Endothelial cell of umbilical vein (primary cell): ENCODE measurements at regions of chr13 and their contacts with region 1.

Region 1: GRCh38 chr13:40682449-40683240 is 16.2 kb upstream of the FOXO1 start:
- DNase-seq: peak; percentile 63
- H3K4me3 ChIP-seq: no peak overlapping the region
- H3K27ac ChIP-seq: peak overlapping the region; percentile 73
- H3K4me1 ChIP-seq: peaks cover 22% of the 10 kb centered on the region
- H3K27me3 ChIP-seq: no peaks in the 10 kb centered on the region
- CTCF ChIP-seq: peak; percentile 11 to 21
- POLR2A ChIP-seq: no peak

Region 2: DNA sequence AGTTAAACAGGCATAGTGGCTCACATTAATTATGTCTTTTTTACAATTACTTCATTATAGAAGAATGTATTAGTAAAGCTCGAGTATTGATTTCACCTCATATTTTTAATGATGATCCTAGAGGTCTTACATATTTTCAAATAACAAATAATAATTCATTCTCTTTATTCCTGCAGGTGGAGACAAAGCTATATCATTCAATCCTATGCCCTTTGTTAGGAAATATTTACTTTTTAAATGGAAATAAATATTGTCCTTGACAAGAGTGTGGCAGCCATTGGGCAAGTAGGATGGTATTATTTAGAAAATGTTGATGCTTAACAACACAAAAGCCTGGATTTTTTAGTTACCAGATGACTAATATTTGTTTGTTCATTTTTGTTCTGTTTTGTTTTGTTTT is 899.6 kb before region 1 on chr13:
- CTCF ChIA-PET with region 1: interaction called, 47 read pairs
- POLR2A ChIA-PET with region 1: no interaction called
- dilution Hi-C with region 1: no loop called
- intact Hi-C with region 1: loop called (anchors 2 kb)
- DNase-seq: peak; percentile 80
- H3K4me3 ChIP-seq: no peak overlapping the region
- H3K27ac ChIP-seq: no peak overlapping the region
- H3K4me1 ChIP-seq: peaks cover 62% of the 10 kb centered on the region
- H3K27me3 ChIP-seq: no peaks in the 10 kb centered on the region
- CTCF ChIP-seq: no peak
- POLR2A ChIP-seq: no peak

Region 3: DNA sequence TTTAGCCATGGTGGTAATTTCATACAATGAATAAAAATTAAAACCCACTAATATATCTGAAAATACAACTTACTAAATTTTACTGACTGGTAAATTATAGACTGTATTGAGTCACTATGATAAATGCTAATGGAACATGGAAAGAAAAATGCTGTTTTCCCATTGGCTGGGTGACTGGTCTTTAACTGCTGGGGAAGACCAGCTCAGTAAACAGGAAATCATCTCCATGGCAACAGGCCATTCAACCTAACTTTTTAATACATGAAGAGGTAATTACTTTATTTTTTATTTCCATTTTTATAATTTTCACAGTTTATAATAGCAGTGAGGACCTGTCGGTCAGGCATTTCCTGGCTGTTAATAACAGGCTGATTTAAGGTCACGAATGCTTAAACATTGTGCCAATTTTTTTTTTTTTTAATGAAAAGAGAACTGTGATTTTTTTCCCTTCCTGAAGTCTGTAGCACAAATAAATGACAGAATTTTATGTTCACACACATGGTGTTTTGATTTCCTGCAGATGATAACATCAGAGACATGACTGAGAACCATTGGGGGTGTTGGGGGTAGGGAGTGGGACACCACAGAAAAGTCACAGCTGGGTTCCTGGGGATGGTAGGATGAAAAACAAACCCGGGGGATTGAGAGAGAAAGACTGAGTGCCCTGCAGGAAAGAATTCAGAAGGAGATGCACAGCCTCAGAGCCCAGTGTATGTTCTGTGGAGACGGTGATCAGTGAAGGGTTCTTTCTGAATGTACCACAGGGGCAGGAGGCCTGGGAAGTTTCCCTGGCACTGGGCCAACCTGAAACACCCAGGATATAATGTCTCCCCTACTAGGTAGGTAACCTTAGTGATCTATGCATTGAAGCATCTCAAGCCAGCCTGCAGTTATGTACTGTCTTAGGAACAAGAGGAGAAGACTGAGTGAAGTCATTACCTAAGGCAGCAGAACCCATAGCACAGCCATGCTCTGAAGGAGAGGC is 730.1 kb before region 1 on chr13:
- CTCF ChIA-PET with region 1: interaction called, 5 read pairs
- POLR2A ChIA-PET with region 1: no interaction called
- dilution Hi-C with region 1: no loop called
- intact Hi-C with region 1: loop called (anchors 1 kb)
- DNase-seq: peak; percentile 97
- H3K4me3 ChIP-seq: no peak overlapping the region
- H3K27ac ChIP-seq: peak overlapping the region; percentile 88
- H3K4me1 ChIP-seq: peaks cover 24% of the 10 kb centered on the region
- H3K27me3 ChIP-seq: no peaks in the 10 kb centered on the region
- CTCF ChIP-seq: no peak
- POLR2A ChIP-seq: no peak

Region 4: DNA sequence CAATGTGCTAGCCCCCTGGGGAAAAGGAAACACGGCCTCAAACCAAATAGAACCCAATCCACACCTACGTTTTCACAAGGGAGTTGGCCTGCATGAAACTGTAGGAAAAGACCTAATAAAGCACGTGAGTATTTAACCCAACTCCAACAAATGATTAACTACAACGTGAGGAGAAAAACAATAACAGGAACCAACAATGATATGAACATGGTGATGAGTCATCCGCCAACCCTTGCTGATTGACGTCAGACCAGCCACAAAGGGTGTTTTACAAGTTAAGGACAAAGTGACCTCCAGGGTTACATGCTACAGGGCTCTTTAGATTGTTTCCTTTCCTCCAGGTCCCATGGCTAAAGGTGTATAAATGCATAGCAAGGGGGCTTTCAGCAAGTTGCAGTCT is 566.6 kb before region 1 on chr13:
- CTCF ChIA-PET with region 1: no interaction called
- POLR2A ChIA-PET with region 1: no interaction called
- dilution Hi-C with region 1: no loop called
- intact Hi-C with region 1: loop called (anchors 2 kb)
- DNase-seq: peak; percentile 98
- H3K4me3 ChIP-seq: no peak overlapping the region
- H3K27ac ChIP-seq: peak overlapping the region; percentile 93
- H3K4me1 ChIP-seq: peaks cover 17% of the 10 kb centered on the region
- H3K27me3 ChIP-seq: no peaks in the 10 kb centered on the region
- CTCF ChIP-seq: no peak
- POLR2A ChIP-seq: no peak

Region 5: GRCh38 chr13:40503966-40504591 is 178.6 kb before region 1 on chr13:
- CTCF ChIA-PET with region 1: no interaction called
- POLR2A ChIA-PET with region 1: no interaction called
- dilution Hi-C with region 1: no loop called
- intact Hi-C with region 1: loop called (anchors 2 kb)
- DNase-seq: peak; percentile 99
- H3K4me3 ChIP-seq: no peak overlapping the region
- H3K27ac ChIP-seq: peak overlapping the region; percentile 99
- H3K4me1 ChIP-seq: peaks cover 51% of the 10 kb centered on the region
- H3K27me3 ChIP-seq: no peaks in the 10 kb centered on the region
- CTCF ChIP-seq: no peak
- POLR2A ChIP-seq: peak; percentile 74

Region 6: GRCh38 chr13:40597740-40598370 is 84.8 kb before region 1 on chr13:
- CTCF ChIA-PET with region 1: no interaction called
- POLR2A ChIA-PET with region 1: no interaction called
- dilution Hi-C with region 1: no loop called
- intact Hi-C with region 1: no loop called
- DNase-seq: no peak
- H3K4me3 ChIP-seq: no peak overlapping the region
- H3K27ac ChIP-seq: no peak overlapping the region
- H3K4me1 ChIP-seq: no peaks in the 10 kb centered on the region
- H3K27me3 ChIP-seq: no peaks in the 10 kb centered on the region
- CTCF ChIP-seq: no peak
- POLR2A ChIP-seq: no peak

Region 7: GRCh38 chr13:40613192-40613818 is 69.3 kb before region 1 on chr13:
- CTCF ChIA-PET with region 1: no interaction called
- POLR2A ChIA-PET with region 1: no interaction called
- dilution Hi-C with region 1: no loop called
- intact Hi-C with region 1: no loop called
- DNase-seq: peak; percentile 70
- H3K4me3 ChIP-seq: no peak overlapping the region
- H3K27ac ChIP-seq: peak overlapping the region; percentile 98
- H3K4me1 ChIP-seq: peaks cover 75% of the 10 kb centered on the region
- H3K27me3 ChIP-seq: no peaks in the 10 kb centered on the region
- CTCF ChIP-seq: no peak
- POLR2A ChIP-seq: no peak

Region 8: GRCh38 chr13:41019011-41019487 is 336.4 kb after region 1 on chr13 and contains the start of gene ELF1:
- CTCF ChIA-PET with region 1: no interaction called
- POLR2A ChIA-PET with region 1: no interaction called
- dilution Hi-C with region 1: no loop called
- intact Hi-C with region 1: no loop called
- DNase-seq: peak; percentile 72
- H3K4me3 ChIP-seq: peak within 1 kb of the TSS; percentile 23 to 91 (median 68)
- H3K27ac ChIP-seq: peak within 1 kb of the TSS; percentile 86
- H3K4me1 ChIP-seq: peaks cover 3% of the 10 kb centered on the region
- H3K27me3 ChIP-seq: no peaks in the 10 kb centered on the region
- CTCF ChIP-seq: no peak
- POLR2A ChIP-seq: no peak
- total RNA-seq, gene ELF1: 61.2 and 62.5 TPM in 2 replicates

Region 9: DNA sequence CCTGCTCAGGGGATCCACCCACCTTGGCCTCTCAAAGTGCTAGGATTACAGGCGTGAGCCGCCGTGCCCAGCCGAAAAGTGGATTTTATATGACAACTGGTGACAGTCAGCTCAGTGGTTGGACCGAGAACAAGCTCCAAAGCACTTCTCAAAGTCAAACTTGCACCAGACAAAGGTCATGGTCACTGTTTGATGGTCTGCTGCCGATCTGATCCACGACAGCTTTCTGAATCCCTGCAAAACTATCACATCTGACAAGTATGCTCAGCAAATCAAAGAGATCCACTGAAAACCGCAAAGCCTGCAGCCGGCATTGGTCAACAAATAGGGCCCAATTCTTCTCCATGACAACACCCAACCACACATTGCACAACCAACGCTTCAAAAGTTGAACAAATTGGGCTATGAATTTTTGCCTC is 606.8 kb after region 1 on chr13:
- CTCF ChIA-PET with region 1: no interaction called
- POLR2A ChIA-PET with region 1: no interaction called
- dilution Hi-C with region 1: no loop called
- intact Hi-C with region 1: no loop called
- DNase-seq: no peak
- H3K4me3 ChIP-seq: no peak overlapping the region
- H3K27ac ChIP-seq: no peak overlapping the region
- H3K4me1 ChIP-seq: peaks cover 3% of the 10 kb centered on the region
- H3K27me3 ChIP-seq: no peaks in the 10 kb centered on the region
- CTCF ChIP-seq: no peak
- POLR2A ChIP-seq: no peak